ENCODE measurements at regions of chr5 and their contacts with region 1.

Region 1: DNA sequence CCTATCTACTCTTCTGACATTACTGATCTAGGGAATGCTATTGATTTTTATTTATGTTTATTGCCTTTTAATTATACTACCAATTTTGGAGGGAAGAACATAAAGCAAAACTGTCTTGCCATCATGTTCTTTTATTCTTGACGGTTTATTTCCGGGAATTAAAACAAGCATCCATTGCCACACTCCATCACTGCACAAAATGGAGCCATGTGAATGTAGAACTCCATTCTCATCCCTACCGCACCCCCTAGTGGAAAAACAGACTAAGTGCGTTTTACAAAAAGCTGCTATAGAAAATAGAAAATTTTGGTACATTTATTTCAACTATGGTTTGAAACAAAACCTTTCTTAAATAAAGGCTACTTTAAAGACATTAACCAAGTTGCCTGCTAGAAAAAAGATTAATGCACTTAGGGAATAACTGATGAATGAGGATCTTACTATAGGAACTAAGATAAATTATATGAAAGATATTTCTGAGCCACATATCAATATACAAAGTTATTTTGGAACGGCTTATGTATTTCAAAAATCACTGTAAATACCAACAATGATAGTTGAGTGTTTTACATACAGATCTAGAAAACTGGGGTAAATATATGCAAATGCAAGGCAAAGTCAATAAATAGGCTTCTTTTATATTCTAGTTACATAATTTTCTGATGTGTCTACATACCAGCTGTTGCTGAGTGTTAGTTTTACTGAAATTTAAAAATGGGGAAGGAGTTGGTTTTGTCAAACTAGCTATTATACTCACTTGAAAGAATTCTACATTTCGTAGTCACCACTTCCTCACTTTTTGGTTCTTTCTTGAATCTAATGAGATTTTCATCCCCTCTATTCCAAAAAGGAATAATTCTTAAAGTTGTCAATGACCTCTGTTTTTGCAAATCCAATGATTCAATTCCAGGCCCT is 26.5 kb downstream of the OXCT1 start:
- DNase-seq: no peak
- H3K4me3 Mint-ChIP-seq: no peak overlapping the region
- H3K27ac Mint-ChIP-seq: no peak overlapping the region
- H3K4me1 Mint-ChIP-seq: no peaks in the 10 kb centered on the region
- H3K27me3 Mint-ChIP-seq: no peaks in the 10 kb centered on the region

Region 2: GRCh38 chr5:40904205-40904993 is 939.3 kb before region 1 on chr5:
- intact Hi-C with region 1: loop called (anchors 2 kb)
- DNase-seq: no peak
- H3K4me3 Mint-ChIP-seq: no peak overlapping the region
- H3K27ac Mint-ChIP-seq: no peak overlapping the region
- H3K4me1 Mint-ChIP-seq: no peaks in the 10 kb centered on the region
- H3K27me3 Mint-ChIP-seq: peaks cover 6% of the 10 kb centered on the region

Region 3: DNA sequence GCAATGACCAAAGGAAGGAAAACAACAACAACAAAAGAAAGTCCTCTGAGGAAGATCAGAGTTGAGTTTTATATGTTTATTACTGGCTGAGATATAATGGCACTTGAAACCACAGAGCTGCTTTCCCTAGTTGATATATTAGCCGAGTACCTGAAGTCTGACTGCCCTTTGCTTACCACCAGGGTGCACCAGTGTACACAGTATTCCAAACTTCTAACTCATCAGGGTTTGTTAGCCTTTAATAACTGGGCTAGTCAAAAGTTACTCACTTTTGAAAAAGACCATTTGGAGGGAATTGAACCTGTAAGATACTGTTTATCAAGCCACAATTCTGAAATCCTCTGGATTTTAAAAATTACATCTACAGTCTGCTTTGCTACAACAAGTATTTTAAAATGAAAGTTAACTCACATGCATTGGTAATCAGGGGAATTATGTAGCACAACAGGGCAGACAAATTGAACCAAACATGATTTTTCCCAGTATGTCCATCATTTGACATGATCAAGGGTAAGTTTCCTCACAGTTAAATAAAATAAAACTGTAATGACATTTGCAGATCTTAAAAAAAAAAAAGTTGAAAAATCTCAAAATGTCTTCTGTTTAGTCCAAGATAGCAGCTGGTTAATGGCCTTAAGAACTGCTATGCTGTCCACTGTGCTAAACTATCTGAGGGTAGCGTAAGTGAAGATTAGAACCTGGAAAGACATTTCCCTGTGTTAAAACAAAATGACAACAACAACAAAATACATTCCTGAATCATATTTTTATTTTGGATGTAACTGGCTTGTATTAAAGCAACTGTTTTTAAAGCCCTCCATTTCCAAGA is 573.1 kb before region 1 on chr5:
- intact Hi-C with region 1: loop called (anchors 1 kb)
- DNase-seq: no peak
- H3K4me3 Mint-ChIP-seq: no peak overlapping the region
- H3K27ac Mint-ChIP-seq: no peak overlapping the region
- H3K4me1 Mint-ChIP-seq: no peaks in the 10 kb centered on the region
- H3K27me3 Mint-ChIP-seq: no peaks in the 10 kb centered on the region

Region 4: DNA sequence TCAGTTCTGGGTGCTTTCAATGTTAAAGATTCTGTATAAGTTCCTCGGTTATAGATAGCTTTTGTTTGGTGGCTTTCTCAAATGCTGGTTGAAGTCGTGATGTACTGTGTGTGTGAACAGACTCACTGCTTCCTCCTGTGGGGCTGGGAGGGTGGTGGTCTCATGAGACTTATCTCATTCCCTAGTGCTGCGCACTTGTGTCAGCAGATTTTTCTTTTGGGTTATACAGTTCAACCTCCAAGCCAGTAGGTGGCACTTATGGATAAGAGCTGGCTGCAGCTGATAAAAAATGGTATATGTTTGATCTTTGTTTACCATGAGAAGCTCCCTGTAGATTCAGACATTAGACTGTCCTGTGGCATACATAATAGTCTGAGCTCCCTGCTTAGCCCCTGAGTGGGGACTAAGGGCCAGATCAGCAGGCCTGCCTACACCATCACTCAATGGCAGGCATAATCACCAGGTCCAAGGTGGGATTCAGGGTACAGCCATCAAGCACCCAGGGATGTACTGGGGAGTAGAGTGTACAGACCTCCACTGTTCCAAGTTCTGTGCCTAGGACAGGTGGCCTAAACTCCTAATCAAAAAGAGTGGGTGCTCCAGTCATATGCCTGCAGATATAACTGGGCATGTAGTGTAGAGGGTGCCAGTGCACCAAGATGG is 147.7 kb before region 1 on chr5:
- intact Hi-C with region 1: loop called (anchors 1 kb)
- DNase-seq: no peak
- H3K4me3 Mint-ChIP-seq: no peak overlapping the region
- H3K27ac Mint-ChIP-seq: no peak overlapping the region
- H3K4me1 Mint-ChIP-seq: no peaks in the 10 kb centered on the region
- H3K27me3 Mint-ChIP-seq: peaks cover 9% of the 10 kb centered on the region

Region 5: GRCh38 chr5:41707853-41708603 is 135.7 kb before region 1 on chr5:
- intact Hi-C with region 1: loop called (anchors 1 kb)
- DNase-seq: no peak
- H3K4me3 Mint-ChIP-seq: no peak overlapping the region
- H3K27ac Mint-ChIP-seq: no peak overlapping the region
- H3K4me1 Mint-ChIP-seq: no peaks in the 10 kb centered on the region
- H3K27me3 Mint-ChIP-seq: peaks cover 15% of the 10 kb centered on the region

Region 6: GRCh38 chr5:41754857-41755256 is 88.9 kb before region 1 on chr5:
- intact Hi-C with region 1: loop called (anchors 1 kb)
- DNase-seq: no peak
- H3K4me3 Mint-ChIP-seq: no peak overlapping the region
- H3K27ac Mint-ChIP-seq: no peak overlapping the region
- H3K4me1 Mint-ChIP-seq: peaks cover 22% of the 10 kb centered on the region
- H3K27me3 Mint-ChIP-seq: no peaks in the 10 kb centered on the region

Region 7: GRCh38 chr5:41809128-41809527 is 34.6 kb before region 1 on chr5:
- intact Hi-C with region 1: loop called (anchors 5 kb)
- DNase-seq: no peak
- H3K4me3 Mint-ChIP-seq: no peak overlapping the region
- H3K27ac Mint-ChIP-seq: no peak overlapping the region
- H3K4me1 Mint-ChIP-seq: peaks cover 45% of the 10 kb centered on the region
- H3K27me3 Mint-ChIP-seq: no peaks in the 10 kb centered on the region